A549 (cell line): ENCODE measurements at regions of chr5 and their contacts with region 1.

Region 1: DNA sequence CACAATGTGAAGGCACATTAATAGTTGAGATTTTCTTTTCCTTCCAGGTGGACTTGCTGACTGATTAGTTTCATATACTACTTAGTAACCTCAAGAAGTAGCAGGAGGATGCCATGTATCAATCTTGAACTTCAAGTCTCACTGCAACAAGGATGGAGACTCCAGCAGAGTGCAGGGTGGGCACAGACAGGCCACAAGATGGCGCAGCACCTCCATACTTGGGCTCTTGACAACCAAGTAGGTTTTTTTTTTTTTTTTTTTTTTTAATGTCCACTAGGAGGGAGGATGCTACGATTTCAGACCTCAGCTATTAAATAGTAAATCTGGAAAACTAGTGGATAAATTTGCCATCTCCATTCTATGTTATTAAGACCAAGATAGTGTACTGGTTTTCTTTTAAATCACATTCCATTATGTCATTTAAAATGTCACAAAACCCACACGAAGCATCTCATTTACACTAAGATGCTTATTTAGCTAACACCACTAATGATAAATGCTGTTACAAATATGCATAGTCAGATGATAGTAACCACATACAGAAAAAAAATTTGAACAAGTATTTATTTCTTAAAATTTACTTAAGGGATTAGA is 58.6 kb downstream of the IL6ST start:
- DNase-seq: peak; percentile 68 to 91
- ATAC-seq: peak; percentile 58 to 83
- H3K4me3 ChIP-seq: no peak overlapping the region
- H3K27ac ChIP-seq: peak overlapping the region; percentile 87 to 93
- H3K4me1 ChIP-seq: peaks cover 64% of the 10 kb centered on the region
- CTCF ChIP-seq: peak; percentile 99
- EP300 ChIP-seq: no peak
- POLR2A ChIP-seq: no peak
- RAD21 ChIP-seq: peak; percentile 96 to 98

Region 2: DNA sequence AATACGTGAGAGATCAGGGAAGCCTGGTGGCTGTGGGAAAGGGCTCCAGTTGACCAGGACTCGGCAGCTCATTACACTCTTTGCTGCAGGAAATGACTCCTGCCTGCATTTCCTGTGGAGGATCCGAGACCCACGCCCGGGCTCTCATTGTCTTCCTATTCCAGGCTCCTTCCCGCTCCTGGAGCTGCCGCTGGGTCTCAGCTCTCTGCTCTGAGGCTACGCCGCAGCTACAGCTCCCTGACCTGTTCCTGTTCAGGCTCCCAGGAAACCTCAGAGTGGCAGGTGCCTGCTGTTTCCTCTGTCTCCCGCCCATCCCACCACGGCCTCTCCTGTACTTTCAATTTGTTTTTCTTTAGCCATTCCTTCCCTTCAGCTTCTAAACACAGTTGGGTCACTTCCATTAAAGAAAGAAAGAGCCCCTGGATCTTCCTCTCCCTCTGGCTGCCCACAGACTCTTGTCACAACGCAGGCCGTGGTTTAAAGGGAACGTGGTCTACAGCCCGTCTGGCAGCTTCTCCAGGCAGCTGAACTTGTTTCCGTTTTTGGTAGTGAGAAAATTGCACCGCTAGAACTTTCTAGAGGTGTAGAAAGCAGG is 12.9 kb before region 1 on chr5:
- CTCF ChIA-PET with region 1: interaction called, 14 read pairs
- POLR2A ChIA-PET with region 1: no interaction called
- DNase-seq: no peak
- ATAC-seq: no peak
- H3K4me3 ChIP-seq: no peak overlapping the region
- H3K27ac ChIP-seq: peak overlapping the region; percentile 31 to 82; a peak in 3 of 6 replicates
- H3K4me1 ChIP-seq: peaks cover 25% of the 10 kb centered on the region
- CTCF ChIP-seq: no peak
- EP300 ChIP-seq: no peak
- POLR2A ChIP-seq: no peak
- RAD21 ChIP-seq: no peak

Region 3: GRCh38 chr5:55982957-55983381 is 46.8 kb after region 1 on chr5:
- CTCF ChIA-PET with region 1: interaction called, 12 read pairs
- POLR2A ChIA-PET with region 1: no interaction called
- DNase-seq: peak in 1 of 2 experiments; percentile 60
- ATAC-seq: peak; percentile 79 to 84; a peak in 5 of 6 replicates
- H3K4me3 ChIP-seq: no peak overlapping the region
- H3K27ac ChIP-seq: peak overlapping the region; percentile 6 to 66; a peak in 3 of 6 replicates
- H3K4me1 ChIP-seq: peaks cover 39% of the 10 kb centered on the region
- CTCF ChIP-seq: peak; percentile 43; the same call in 2 of the 3 replicates
- EP300 ChIP-seq: no peak
- POLR2A ChIP-seq: no peak
- RAD21 ChIP-seq: peak; percentile 55 to 65

Region 4: GRCh38 chr5:56070851-56071465 is 134.8 kb after region 1 on chr5:
- CTCF ChIA-PET with region 1: interaction called, 14 read pairs
- POLR2A ChIA-PET with region 1: no interaction called
- DNase-seq: no peak
- ATAC-seq: no peak
- H3K4me3 ChIP-seq: no peak overlapping the region
- H3K27ac ChIP-seq: peak overlapping the region; percentile 44 to 48; a peak in 5 of 6 replicates
- H3K4me1 ChIP-seq: peaks cover 32% of the 10 kb centered on the region; the same call in 2 of the 3 replicates
- CTCF ChIP-seq: no peak
- EP300 ChIP-seq: no peak
- POLR2A ChIP-seq: no peak
- RAD21 ChIP-seq: no peak

Region 5: GRCh38 chr5:56200856-56201666 is 264.9 kb after region 1 on chr5:
- CTCF ChIA-PET with region 1: interaction called, 116 read pairs
- POLR2A ChIA-PET with region 1: interaction called, 5 read pairs
- DNase-seq: peak; percentile 72 to 90
- ATAC-seq: peak; percentile 100
- H3K4me3 ChIP-seq: no peak overlapping the region
- H3K27ac ChIP-seq: peak overlapping the region; percentile 65 to 82
- H3K4me1 ChIP-seq: peaks cover 28% of the 10 kb centered on the region
- CTCF ChIP-seq: peak; percentile 93
- EP300 ChIP-seq: no peak
- POLR2A ChIP-seq: no peak
- RAD21 ChIP-seq: peak; percentile 99

Region 6: DNA sequence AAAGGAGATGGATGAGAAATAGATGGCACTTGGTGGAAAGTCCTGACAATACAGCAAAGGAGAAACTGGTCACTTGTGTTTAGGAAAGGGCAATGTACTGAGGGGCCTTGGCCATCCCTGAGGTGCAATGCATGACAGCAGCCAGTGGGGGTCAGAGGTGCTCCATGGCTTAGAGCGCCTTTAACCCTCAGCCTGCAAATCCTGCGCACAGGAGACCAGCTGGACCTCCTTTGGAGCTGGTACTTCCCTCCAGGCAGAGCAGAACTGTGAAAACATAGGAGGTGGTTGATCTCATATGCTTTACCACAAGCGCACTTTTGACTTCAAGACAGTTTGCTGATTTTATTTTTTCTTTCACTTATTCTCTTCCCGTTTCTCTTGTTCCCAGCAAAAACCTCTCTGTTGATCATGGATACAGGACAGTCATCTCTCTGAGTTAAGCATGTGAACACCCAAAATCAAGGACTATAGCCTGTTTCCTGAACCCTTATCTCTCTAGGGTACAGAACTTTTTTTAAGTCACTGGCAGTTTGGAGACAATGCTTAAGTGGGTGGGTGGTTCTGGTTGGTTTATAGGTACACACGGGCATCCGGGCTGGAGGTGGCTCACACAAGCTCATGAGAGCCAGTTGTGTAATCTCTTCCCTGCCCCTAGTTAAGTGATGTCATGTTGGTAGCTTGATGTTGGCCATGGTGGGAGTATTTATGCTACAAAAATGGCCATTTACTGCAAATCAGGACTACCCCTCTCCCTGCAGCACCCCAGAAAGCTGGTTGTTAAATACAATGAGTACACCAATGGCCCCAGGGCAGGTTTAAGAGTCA is 334.6 kb after region 1 on chr5:
- CTCF ChIA-PET with region 1: interaction called, 108 read pairs
- POLR2A ChIA-PET with region 1: no interaction called
- DNase-seq: peak; percentile 63 to 83
- ATAC-seq: peak; percentile 97 to 100
- H3K4me3 ChIP-seq: no peak overlapping the region
- H3K27ac ChIP-seq: peak overlapping the region in 1 of 2 experiments; percentile 56; a peak in 4 of 6 replicates
- H3K4me1 ChIP-seq: peaks cover 18% of the 10 kb centered on the region
- CTCF ChIP-seq: peak; percentile 96
- EP300 ChIP-seq: no peak
- POLR2A ChIP-seq: no peak
- RAD21 ChIP-seq: peak; percentile 99